ENCODE measurements at regions of chr20 and their contacts with region 1.

Region 1: DNA sequence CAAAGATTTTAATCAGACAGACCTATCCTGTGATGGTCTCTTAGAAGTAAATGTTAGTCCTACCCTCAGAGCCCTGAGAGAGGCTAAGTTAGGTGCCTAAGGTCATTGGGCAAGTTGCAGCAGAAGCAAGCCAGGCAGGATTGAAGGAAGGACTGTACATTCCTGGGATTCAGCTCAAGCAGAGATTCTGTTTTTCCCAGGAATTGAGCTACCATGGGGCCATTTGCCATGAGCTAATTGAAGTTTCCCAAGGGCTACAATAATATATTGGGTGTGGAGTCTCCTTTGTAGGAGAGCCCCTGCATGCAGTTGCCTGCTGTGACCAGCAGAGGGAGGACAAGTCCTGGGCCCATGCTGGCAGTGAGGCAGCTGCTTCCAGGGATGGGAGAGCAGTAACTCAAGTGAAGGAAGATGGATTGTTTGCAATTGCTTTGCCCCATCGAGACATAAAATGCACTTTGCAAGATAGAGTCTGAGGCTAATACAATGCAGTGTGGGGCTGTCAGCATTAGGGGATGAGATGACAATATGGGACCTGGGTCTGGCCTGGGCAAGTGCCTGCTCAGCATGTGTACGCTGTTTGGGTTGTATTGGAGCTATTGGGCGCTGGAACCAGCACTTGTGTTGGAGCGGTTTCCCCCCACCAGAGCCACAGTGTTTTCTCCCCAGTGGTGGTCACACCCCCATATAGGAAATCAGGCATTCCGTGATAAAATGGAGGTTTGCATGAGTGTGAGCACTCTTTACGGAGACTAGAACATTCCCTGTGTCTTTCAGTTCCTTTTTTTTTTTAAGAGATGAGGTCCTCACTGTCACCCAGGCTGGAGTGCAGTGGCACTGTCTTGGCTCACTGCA is 27.9 kb downstream of the DNMT3B start:
- DNase-seq: peak; percentile 87
- CTCF ChIP-seq: peak; percentile 99

Region 2: GRCh38 chr20:32674362-32674789 is 115.7 kb before region 1 on chr20:
- CTCF ChIA-PET with region 1: interaction called, 10 read pairs
- POLR2A ChIA-PET with region 1: no interaction called
- DNase-seq: peak; percentile 78
- CTCF ChIP-seq: peak; percentile 73

Region 3: GRCh38 chr20:32762149-32762753 is 27.9 kb before region 1 on chr20 and contains the start of gene DNMT3B:
- CTCF ChIA-PET with region 1: interaction called, 14 read pairs
- POLR2A ChIA-PET with region 1: no interaction called
- DNase-seq: peak; percentile 88
- CTCF ChIP-seq: peak; percentile 22

Region 4: DNA sequence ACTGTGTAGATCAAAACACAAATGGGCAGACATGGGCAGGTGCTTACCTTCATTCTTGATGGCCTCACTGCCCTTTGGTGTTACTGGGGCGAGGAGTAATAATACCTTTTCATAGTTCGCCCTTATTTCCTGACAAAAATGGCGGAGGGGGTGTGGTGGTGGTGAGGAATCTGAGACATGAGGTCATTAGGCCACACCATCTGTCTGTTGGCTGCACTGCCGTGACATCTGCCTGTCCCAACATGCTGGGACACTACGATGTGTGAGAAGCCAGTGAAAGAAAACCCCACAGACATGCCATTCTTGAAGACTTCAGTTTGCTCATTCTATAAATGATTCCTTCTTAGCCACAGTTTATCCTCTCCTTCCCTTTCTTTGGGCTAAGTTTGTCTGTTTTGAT is 16.2 kb after region 1 on chr20:
- CTCF ChIA-PET with region 1: interaction called, 11 read pairs
- POLR2A ChIA-PET with region 1: no interaction called
- DNase-seq: no peak
- CTCF ChIP-seq: no peak

Region 5: GRCh38 chr20:32902456-32903420 is 112.6 kb after region 1 on chr20:
- CTCF ChIA-PET with region 1: interaction called, 12 read pairs
- POLR2A ChIA-PET with region 1: no interaction called
- DNase-seq: peak; percentile 80
- CTCF ChIP-seq: peak; percentile 92

Region 6: DNA sequence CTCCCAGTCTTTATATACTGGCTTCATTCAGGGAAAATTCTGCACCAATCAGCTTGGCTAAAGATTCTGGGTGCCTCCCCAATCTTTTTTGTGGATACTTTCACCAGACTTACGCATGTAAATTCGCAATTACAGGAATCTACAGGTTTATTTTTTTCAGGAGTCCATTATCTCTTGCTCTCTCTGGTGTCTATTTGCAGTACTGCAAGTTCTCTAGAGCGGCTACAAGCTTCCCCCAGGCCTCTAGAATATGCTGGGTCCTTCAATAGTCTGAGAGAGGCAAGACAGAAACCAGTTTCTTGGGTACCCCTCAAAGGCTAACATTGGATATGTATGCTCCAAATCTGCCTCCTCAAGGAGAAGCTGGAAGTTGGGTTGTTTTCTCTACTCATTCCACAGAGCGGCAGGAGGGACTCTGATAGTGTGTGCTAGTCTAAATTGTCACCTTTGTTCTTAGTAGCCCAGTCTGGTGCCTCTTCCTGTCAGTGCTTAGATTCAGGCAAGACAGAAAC is 155.6 kb after region 1 on chr20:
- CTCF ChIA-PET with region 1: interaction called, 10 read pairs
- POLR2A ChIA-PET with region 1: no interaction called
- DNase-seq: no peak
- CTCF ChIP-seq: peak; percentile 1

Measured in GM10248 (cell line).